Right cardiac atrium (tissue), 5 donors: ENCODE measurements at regions of chr6 and their contacts with region 1.

Region 1: GRCh38 chr6:70547313-70547712 is 19.4 kb upstream of the SDHAF4 start:
- DNase-seq: no peak
- ATAC-seq: peak; percentile 48 to 59
- H3K4me3 ChIP-seq: no peak overlapping the region
- H3K27ac ChIP-seq: no peak overlapping the region
- H3K4me1 ChIP-seq: no peaks in the 10 kb centered on the region
- H3K27me3 ChIP-seq: no peaks in the 10 kb centered on the region

Region 2: GRCh38 chr6:70686548-70687133 is 139.3 kb after region 1 on chr6:
- intact Hi-C with region 1: loop called in 2 of 4 experiments (anchors 10 kb)
- DNase-seq: no peak
- ATAC-seq: no peak
- H3K4me3 ChIP-seq: no peak overlapping the region
- H3K27ac ChIP-seq: no peak overlapping the region
- H3K4me1 ChIP-seq: peaks cover 2% of the 10 kb centered on the region
- H3K27me3 ChIP-seq: no peaks in the 10 kb centered on the region

Region 3: GRCh38 chr6:71478834-71479541 is 931.7 kb after region 1 on chr6:
- intact Hi-C with region 1: no loop called
- DNase-seq: no peak
- ATAC-seq: peak; percentile 72 to 88
- H3K4me3 ChIP-seq: no peak overlapping the region
- H3K27ac ChIP-seq: peak overlapping the region; percentile 23
- H3K4me1 ChIP-seq: no peaks in the 10 kb centered on the region
- H3K27me3 ChIP-seq: no peaks in the 10 kb centered on the region